Activated B cell treated with CpG ODN at 0.5 μM for 24 hours (primary cell): ENCODE measurements at regions of chr4 and their contacts with region 1.

Region 1: GRCh38 chr4:25234390-25235370 is 847 bp downstream of the PI4K2B start:
- DNase-seq: no peak
- ATAC-seq: peak; percentile 53
- H3K4me3 Mint-ChIP-seq: peak overlapping the region; percentile 90
- H3K27ac Mint-ChIP-seq: peak overlapping the region; percentile 95
- H3K4me1 Mint-ChIP-seq: peaks cover 47% of the 10 kb centered on the region
- H3K27me3 Mint-ChIP-seq: no peaks in the 10 kb centered on the region
- CTCF ChIP-seq: no peak

Region 2: DNA sequence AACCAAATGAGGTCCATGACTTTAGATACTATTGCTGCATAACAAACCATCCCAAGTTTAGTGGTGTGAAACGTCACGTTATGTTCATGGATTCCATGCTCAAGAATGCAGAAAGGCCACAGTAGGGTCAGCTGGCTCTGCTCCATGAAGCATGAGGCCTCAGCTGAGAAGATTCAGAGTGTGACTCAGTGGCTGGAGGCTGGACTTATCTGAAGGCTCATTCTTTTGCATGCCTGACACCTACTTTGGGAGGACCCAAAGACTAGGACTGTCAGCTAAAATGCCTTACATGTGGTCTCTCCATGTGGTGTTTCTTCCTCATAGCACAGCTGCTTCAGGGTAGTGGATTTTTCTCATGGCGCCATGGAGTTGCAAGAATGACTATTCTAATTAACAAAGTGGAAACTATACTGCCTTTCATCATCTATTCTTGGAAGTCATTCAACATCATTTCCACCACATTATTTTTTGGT is 310.3 kb before region 1 on chr4:
- CTCF ChIA-PET with region 1: no interaction called
- POLR2A ChIA-PET with region 1: no interaction called
- intact Hi-C with region 1: no loop called
- DNase-seq: no peak
- ATAC-seq: no peak
- H3K4me3 Mint-ChIP-seq: no peak overlapping the region
- H3K27ac Mint-ChIP-seq: no peak overlapping the region
- H3K4me1 Mint-ChIP-seq: no peaks in the 10 kb centered on the region
- H3K27me3 Mint-ChIP-seq: peaks cover 2% of the 10 kb centered on the region
- CTCF ChIP-seq: no peak

Region 3: GRCh38 chr4:25202431-25202830 is 32.2 kb before region 1 on chr4:
- CTCF ChIA-PET with region 1: no interaction called
- POLR2A ChIA-PET with region 1: no interaction called
- intact Hi-C with region 1: no loop called
- DNase-seq: no peak
- ATAC-seq: no peak
- H3K4me3 Mint-ChIP-seq: no peak overlapping the region
- H3K27ac Mint-ChIP-seq: no peak overlapping the region
- H3K4me1 Mint-ChIP-seq: no peaks in the 10 kb centered on the region
- H3K27me3 Mint-ChIP-seq: no peaks in the 10 kb centered on the region
- CTCF ChIP-seq: no peak

Region 4: DNA sequence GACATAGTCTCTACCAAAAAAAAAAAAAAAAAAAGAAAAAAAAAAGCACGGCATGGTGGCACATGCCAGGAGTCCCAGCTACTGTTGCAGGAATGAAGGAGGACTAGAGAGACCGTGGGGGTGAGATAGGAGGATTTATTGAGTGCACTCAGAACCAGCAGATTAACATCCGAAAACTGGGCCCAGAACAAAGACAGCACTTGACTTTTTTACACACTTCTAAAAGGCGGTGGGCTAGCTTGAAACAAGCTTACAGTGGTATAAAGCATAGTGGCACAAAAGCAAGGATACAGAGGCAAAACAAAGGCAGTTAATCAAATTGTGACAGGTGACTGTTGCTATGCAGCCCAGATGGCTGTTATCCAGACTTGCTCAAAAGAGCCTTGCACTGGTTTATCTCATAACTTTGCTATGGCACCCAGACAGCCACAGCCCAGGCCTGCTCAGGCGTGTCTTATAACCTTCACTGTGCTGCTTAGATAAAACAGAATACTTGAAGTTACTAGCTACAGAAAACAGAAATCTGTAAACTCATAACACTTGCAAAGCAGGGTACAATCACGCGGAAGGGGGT is 10.8 kb before region 1 on chr4:
- CTCF ChIA-PET with region 1: no interaction called
- POLR2A ChIA-PET with region 1: interaction called, 4 read pairs
- intact Hi-C with region 1: loop called (anchors 1 kb)
- DNase-seq: no peak
- ATAC-seq: no peak
- H3K4me3 Mint-ChIP-seq: no peak overlapping the region
- H3K27ac Mint-ChIP-seq: no peak overlapping the region
- H3K4me1 Mint-ChIP-seq: no peaks in the 10 kb centered on the region
- H3K27me3 Mint-ChIP-seq: no peaks in the 10 kb centered on the region
- CTCF ChIP-seq: no peak

Region 5: DNA sequence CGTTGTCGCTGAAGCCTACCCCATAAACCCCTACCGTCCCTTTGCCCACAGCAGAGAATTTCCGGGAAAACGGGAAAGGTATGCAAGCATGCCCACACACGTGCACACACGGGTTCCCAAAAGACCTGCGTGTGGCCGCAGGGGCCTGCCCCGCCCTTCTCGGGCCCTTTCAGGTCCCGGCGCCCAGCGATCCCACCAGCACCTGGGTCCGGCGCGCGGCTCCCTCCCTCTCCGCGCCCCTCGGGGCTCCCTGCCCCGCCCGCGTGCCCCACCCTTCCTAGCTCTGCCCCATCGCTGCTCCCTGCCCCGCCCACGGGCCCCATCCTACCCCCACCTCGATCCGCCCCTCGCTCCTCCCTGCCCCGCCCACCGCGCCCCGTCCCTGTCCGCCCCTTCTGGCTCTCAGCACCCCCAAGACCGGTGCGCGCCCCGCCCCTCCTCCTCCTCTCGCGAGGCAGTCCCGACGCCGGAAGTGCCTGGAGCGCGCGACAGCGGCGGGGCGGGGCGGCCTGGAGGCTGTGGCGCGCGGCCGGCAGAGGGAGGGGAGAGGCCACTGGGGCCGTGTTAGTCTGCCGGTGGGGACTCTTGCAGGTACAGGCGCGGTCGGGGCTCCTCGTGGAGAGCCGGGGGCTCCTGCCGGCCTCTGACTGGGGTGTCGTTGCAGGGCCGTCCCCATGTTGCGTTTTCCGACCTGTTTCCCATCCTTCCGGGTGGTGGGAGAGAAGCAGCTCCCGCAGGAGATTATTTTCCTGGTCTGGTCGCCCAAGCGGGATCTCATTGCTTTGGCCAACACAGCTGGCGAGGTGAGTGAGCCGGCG is 142.3 kb after region 1 on chr4 and contains the start of gene ANAPC4:
- CTCF ChIA-PET with region 1: no interaction called
- POLR2A ChIA-PET with region 1: interaction called, 3 read pairs
- intact Hi-C with region 1: loop called (anchors 1 kb)
- DNase-seq: peak; percentile 95
- ATAC-seq: peak; percentile 94
- H3K4me3 Mint-ChIP-seq: no peak within 1 kb of the TSS
- H3K27ac Mint-ChIP-seq: peak within 1 kb of the TSS; percentile 81
- H3K4me1 Mint-ChIP-seq: peaks cover 5% of the 10 kb centered on the region
- H3K27me3 Mint-ChIP-seq: no peaks in the 10 kb centered on the region
- CTCF ChIP-seq: no peak
- total RNA-seq, gene ANAPC4: 36.8 and 37.0 TPM in 2 replicates